GM10248 (cell line): ENCODE measurements at regions of chr10 and their contacts with region 1.

Region 1: GRCh38 chr10:92695679-92696605 is 6.2 kb downstream of the HHEX start:
- DNase-seq: no peak
- CTCF ChIP-seq: no peak

Region 2: GRCh38 chr10:92681306-92681834 is 14.6 kb before region 1 on chr10:
- CTCF ChIA-PET with region 1: interaction called, 10 read pairs
- POLR2A ChIA-PET with region 1: no interaction called
- DNase-seq: no peak
- CTCF ChIP-seq: no peak